A549 (cell line): ENCODE measurements at regions of chr20 and their contacts with region 1.

Region 1: DNA sequence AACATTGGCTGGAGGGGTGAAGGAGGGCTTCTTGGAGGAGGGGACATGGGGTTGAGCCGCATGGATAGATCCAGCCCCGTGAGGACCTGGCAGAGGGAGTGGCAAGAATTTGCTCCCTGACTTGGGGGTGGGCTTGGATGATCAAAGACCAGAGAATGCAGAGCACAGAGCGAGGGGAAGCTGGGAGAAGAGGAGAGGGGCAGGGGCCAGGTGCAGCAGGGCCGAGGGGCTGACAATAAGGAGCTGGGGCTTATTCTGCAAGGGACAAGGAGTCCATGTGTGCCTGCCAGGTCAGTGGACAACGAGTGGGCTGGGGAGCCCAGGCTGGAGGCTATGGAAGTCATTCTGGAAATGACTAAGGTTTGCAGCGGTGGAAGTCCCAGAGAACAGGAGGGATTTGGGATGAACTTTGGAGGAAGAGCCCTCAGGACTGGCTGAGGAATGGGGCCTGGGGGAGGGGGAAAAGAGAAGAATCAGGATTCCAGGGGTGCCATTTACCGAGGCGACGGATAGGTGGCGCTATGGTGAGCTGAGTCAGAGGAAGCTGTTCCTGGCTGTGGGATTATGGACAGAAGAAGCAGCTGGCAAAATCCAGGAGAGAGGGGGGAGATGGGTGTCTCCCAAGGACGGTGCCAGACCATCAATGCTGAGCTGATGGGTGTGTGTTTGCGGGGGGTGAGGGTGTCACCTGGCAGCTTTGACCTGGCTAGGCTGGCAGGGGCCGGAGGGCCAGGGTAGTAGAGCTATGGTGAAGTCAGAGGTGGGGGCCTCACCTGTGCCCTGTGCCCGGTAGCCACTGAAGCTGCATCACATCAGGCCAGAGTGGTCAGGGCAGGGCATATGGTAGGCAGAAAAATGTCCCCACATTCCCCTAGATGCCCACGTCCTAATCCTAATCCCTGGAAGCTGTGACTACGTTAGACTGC is 7.8 kb downstream of the KCNG1 start:
- DNase-seq: peak; percentile 59 to 84
- ATAC-seq: peak; percentile 67 to 85; a peak in 5 of 6 replicates
- H3K4me3 ChIP-seq: no peak overlapping the region
- H3K27ac ChIP-seq: no peak overlapping the region
- H3K4me1 ChIP-seq: no peaks in the 10 kb centered on the region
- CTCF ChIP-seq: peak; percentile 65
- EP300 ChIP-seq: no peak
- POLR2A ChIP-seq: no peak
- RAD21 ChIP-seq: peak; percentile 43 to 59; a peak in 4 of 5 replicates

Region 2: DNA sequence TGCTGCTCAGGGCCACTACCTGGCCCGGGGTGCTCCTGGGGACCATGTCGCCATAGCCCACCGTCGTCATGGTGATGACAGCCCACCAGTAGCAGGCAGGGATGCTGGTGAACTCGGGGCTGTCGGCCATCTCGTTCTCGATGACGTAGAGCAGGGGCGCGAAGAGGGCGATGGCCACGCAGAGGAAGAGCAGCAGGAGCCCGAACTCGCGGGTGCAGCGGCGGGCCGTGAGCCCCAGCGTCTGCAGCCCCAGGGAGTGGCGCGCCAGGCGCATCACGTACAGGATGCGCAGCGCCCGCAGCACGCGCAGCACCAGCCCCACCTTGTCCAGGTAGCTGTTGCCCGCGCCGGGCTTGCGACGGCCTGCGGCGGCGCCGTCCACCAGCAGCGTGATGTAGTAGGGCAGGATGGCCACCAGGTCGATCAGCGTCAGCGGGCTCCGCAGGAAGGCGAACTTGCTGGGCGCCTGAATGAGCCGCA is 10.8 kb before region 1 on chr20:
- CTCF ChIA-PET with region 1: interaction called, 18 read pairs
- POLR2A ChIA-PET with region 1: no interaction called
- DNase-seq: no peak
- ATAC-seq: no peak
- H3K4me3 ChIP-seq: no peak overlapping the region
- H3K27ac ChIP-seq: no peak overlapping the region
- H3K4me1 ChIP-seq: no peaks in the 10 kb centered on the region
- CTCF ChIP-seq: no peak
- EP300 ChIP-seq: no peak
- POLR2A ChIP-seq: no peak
- RAD21 ChIP-seq: no peak

Region 3: GRCh38 chr20:51029963-51030920 is 15.2 kb after region 1 on chr20:
- CTCF ChIA-PET with region 1: interaction called, 32 read pairs
- POLR2A ChIA-PET with region 1: no interaction called
- DNase-seq: no peak
- ATAC-seq: no peak
- H3K4me3 ChIP-seq: no peak overlapping the region
- H3K27ac ChIP-seq: peak overlapping the region in 1 of 2 experiments; percentile 26; a peak in 1 of 6 replicates
- H3K4me1 ChIP-seq: peaks cover 17% of the 10 kb centered on the region
- CTCF ChIP-seq: no peak
- EP300 ChIP-seq: no peak
- POLR2A ChIP-seq: no peak
- RAD21 ChIP-seq: no peak

Region 4: DNA sequence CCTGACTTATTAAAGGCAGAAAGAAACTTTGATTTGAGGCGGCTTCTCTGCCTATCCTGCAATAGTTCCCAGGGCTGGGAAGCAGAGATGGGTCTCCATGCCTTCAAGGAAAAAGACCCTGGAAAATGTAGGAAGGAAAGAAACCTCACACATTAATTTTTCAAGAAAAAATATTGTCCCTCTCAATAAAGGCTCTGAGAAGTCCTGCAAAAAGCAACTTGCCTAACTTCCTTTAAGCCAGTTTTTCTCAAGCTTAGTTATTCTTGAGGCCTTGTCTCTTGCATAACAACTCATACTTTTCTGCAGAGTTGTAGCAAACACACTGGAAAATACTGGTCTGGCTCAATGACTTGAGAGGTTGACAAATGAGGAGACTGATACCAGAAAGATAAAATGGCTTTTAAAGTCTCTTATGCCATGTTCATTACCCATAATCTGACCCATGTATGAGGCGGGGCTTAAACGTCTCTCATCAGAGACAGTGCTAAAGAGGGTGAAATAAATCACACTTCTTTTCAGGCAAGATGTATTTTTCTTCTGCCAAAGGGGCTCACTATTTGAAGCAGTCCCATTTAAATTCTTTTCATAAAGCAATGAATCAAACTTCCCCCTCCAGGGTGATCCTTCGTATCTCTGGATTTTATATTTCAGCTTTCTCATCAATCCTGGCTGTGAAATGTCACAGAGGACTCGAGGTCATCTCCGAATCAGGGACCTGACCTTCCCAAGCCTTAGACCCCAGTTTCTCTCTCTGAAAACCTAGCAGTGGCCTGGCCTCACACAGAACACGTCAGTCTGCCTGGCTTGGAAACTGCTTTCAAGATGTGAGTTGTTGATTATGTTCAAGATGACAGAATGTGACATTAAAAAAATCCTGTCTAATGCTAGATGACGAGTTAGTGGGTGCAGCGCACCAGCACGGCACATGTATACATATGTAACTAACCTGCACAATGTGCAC is 90.2 kb after region 1 on chr20:
- CTCF ChIA-PET with region 1: no interaction called
- POLR2A ChIA-PET with region 1: no interaction called
- DNase-seq: no peak
- ATAC-seq: no peak
- H3K4me3 ChIP-seq: no peak overlapping the region
- H3K27ac ChIP-seq: no peak overlapping the region
- H3K4me1 ChIP-seq: no peaks in the 10 kb centered on the region
- CTCF ChIP-seq: no peak
- EP300 ChIP-seq: no peak
- POLR2A ChIP-seq: no peak
- RAD21 ChIP-seq: no peak

Region 5: GRCh38 chr20:51144476-51144875 is 129.4 kb after region 1 on chr20:
- CTCF ChIA-PET with region 1: no interaction called
- POLR2A ChIA-PET with region 1: no interaction called
- DNase-seq: no peak
- ATAC-seq: no peak
- H3K4me3 ChIP-seq: no peak overlapping the region
- H3K27ac ChIP-seq: no peak overlapping the region
- H3K4me1 ChIP-seq: no peaks in the 10 kb centered on the region
- CTCF ChIP-seq: no peak
- EP300 ChIP-seq: no peak
- POLR2A ChIP-seq: no peak
- RAD21 ChIP-seq: no peak